ENCODE measurements at regions of chr1 and their contacts with region 1.

Region 1: GRCh38 chr1:213015099-213016050 is at the start of gene ANGEL2:
- DNase-seq: peak; percentile 77 to 97 (median 93)
- ATAC-seq: peak; percentile 99
- H3K4me3 ChIP-seq: peak within 1 kb of the TSS; percentile 87
- H3K4me3 Mint-ChIP-seq: peak within 1 kb of the TSS; percentile 92 to 100 (median 100)
- H3K27ac ChIP-seq: peak within 1 kb of the TSS; percentile 82
- H3K27ac Mint-ChIP-seq: peak within 1 kb of the TSS; percentile 94 to 100 (median 99)
- H3K4me1 ChIP-seq: peaks cover 12 to 19% of the 10 kb centered on the region in 2 donors
- H3K4me1 Mint-ChIP-seq: peaks cover 26 to 47% (median 40%) of the 10 kb centered on the region in 7 donors
- H3K27me3 ChIP-seq: no peaks in the 10 kb centered on the region
- H3K27me3 Mint-ChIP-seq: peaks cover 0 to 7% (median 0%) of the 10 kb centered on the region in 5 donors
- total RNA-seq, gene ANGEL2: 57.8 to 96.5 (median 63.4) TPM

Region 2: DNA sequence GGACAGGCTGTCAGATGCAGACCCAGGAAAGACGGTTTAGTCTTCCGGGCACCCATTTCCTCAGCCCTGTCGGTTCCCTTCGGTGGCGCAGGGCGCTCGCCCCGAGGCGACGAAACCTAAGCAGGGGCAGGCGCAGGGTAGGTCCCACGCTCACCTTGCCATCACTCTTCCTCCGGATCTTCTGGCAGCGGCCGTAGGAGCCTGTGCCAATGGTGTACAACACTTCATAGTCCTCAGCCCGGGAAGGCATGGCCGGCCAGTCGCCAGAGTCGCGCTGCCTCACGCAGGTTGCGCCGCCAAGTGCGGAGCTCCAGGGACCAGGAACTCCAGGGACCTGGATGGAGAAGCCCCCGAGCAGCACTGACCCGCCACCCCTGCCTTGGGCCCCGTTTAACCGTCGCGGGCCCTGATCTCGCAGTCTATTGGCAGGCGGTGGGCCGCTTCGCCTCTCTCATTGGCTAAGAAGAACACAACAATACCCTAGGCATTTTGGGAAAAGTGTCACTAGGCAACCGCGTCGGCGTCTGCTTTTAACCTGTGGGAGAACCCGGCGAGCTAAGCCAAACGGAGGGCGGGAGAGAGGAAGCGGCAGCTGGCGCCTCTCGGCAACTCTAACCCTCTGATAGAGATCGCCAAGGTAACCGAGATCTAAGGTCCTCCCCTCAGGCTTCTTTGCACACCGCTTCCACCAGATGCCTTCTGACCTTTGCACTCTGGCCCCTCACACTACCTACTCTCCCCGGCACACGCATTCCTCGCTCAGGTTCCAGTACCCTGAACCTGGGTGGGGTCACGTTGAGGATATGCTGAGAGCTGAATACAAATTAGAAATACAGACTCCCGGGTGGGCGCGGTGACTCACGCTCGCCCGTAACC is 1339.9 kb before region 1 on chr1 and contains the start of gene NEK2:
- CTCF ChIA-PET with region 1: no interaction called
- POLR2A ChIA-PET with region 1: no interaction called
- intact Hi-C with region 1: loop called in 1 of 2 experiments (anchors 1 kb)
- DNase-seq: peak; percentile 53 to 90 (median 85)
- ATAC-seq: peak; percentile 97
- H3K4me3 ChIP-seq: peak within 1 kb of the TSS; percentile 76
- H3K4me3 Mint-ChIP-seq: peak within 1 kb of the TSS; percentile 88 to 96 (median 92)
- H3K27ac ChIP-seq: peak within 1 kb of the TSS; percentile 56
- H3K27ac Mint-ChIP-seq: peak within 1 kb of the TSS; percentile 45 to 88 (median 80)
- H3K4me1 ChIP-seq: peaks cover 5 to 7% of the 10 kb centered on the region in 2 donors
- H3K4me1 Mint-ChIP-seq: peaks cover 8 to 38% (median 13%) of the 10 kb centered on the region in 7 donors
- H3K27me3 ChIP-seq: no peaks in the 10 kb centered on the region
- H3K27me3 Mint-ChIP-seq: no peaks in the 10 kb centered on the region
- total RNA-seq, gene NEK2: 0.16 to 26.5 (median 0.25) TPM in 4 of 5 experiments, not detected in the other

Region 3: GRCh38 chr1:212414328-212415106 is 600.9 kb before region 1 on chr1 and contains the start of gene PACC1:
- CTCF ChIA-PET with region 1: no interaction called
- POLR2A ChIA-PET with region 1: no interaction called
- intact Hi-C with region 1: loop called in 1 of 2 experiments (anchors 1 kb)
- DNase-seq: peak; percentile 77 to 89 (median 86)
- ATAC-seq: peak; percentile 98
- H3K4me3 ChIP-seq: peak within 1 kb of the TSS; percentile 98
- H3K4me3 Mint-ChIP-seq: peak within 1 kb of the TSS; percentile 87 to 100 (median 94)
- H3K27ac ChIP-seq: peak within 1 kb of the TSS; percentile 71
- H3K27ac Mint-ChIP-seq: peak within 1 kb of the TSS; percentile 74 to 94 (median 89)
- H3K4me1 ChIP-seq: peaks cover 15 to 19% of the 10 kb centered on the region in 2 donors
- H3K4me1 Mint-ChIP-seq: peaks cover 22 to 46% (median 40%) of the 10 kb centered on the region in 7 donors
- H3K27me3 ChIP-seq: no peaks in the 10 kb centered on the region
- H3K27me3 Mint-ChIP-seq: no peaks in the 10 kb centered on the region
- total RNA-seq, gene PACC1: 7.9 to 13.4 (median 12.0) TPM

Region 4: DNA sequence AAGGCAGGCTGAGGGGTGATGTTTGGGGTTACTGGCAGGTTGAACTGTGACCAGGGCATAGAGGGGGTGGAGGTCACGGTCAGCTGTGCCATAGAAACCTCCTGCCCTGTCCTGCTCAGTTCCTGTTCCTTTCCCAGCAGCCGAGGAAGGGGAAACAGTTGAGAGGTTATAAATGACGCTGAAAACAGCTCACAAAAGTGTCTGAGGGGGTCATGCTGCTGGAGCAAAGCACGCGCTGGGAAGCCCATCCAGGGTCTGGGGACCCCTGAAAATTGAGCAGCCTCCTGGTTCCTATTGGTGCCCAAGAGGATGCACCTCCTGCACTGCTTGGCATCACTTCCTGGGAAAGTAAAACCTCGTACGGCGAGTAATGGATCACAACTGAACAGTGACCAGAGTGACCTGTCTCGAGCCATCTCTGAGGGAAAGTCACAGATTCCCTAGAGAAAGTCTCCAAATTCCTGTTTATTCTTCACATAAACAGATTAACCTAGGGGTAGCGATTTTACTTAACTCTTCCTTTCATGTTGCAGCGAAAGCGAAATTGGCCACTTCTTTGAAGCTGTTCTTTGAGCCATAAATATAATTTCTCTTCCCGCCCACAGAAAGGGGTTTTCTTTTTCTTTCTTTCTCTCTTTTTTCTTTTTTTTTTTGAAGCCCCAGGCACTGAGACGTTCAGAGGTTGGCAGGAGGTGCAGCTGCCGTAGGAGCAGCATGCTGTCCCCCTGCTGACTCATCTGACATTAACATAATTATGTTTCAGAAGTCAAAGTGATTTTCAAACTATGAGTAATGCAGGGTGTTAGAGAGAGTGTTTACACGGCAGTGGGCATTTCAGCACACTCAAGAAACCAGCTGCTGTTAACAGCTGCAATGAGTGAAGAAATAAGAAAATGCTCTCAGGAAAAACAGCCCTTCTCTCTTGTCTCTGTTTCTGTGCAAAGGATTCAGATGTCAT is 448.6 kb before region 1 on chr1:
- CTCF ChIA-PET with region 1: interaction called, 3 read pairs
- POLR2A ChIA-PET with region 1: no interaction called
- intact Hi-C with region 1: loop called in 1 of 2 experiments (anchors 10 kb)
- DNase-seq: peak in 7 of 9 donors; percentile 23 to 66 (median 30)
- ATAC-seq: peak; percentile 96
- H3K4me3 ChIP-seq: peak overlapping the region; percentile 78
- H3K4me3 Mint-ChIP-seq: peak overlapping the region; percentile 80 to 98 (median 88)
- H3K27ac ChIP-seq: peak overlapping the region; percentile 31
- H3K27ac Mint-ChIP-seq: peak overlapping the region; percentile 62 to 90 (median 77)
- H3K4me1 ChIP-seq: peaks cover 0 to 6% of the 10 kb centered on the region in 2 donors
- H3K4me1 Mint-ChIP-seq: peaks cover 9 to 27% (median 15%) of the 10 kb centered on the region in 7 donors
- H3K27me3 ChIP-seq: no peaks in the 10 kb centered on the region
- H3K27me3 Mint-ChIP-seq: peaks cover 0 to 43% (median 0%) of the 10 kb centered on the region in 5 donors

Region 5: GRCh38 chr1:212791676-212792395 is 223.5 kb before region 1 on chr1 and contains the starts of genes NSL1 and TATDN3:
- CTCF ChIA-PET with region 1: no interaction called
- POLR2A ChIA-PET with region 1: interaction called, 8 read pairs
- intact Hi-C with region 1: loop called (anchors 1 kb)
- DNase-seq: peak; percentile 82 to 99 (median 92)
- ATAC-seq: peak; percentile 98
- H3K4me3 ChIP-seq: peak within 1 kb of the TSS; percentile 100
- H3K4me3 Mint-ChIP-seq: peak within 1 kb of the TSS; percentile 86 to 98 (median 95)
- H3K27ac ChIP-seq: peak within 1 kb of the TSS; percentile 83
- H3K27ac Mint-ChIP-seq: peak within 1 kb of the TSS; percentile 87 to 99 (median 96)
- H3K4me1 ChIP-seq: peaks cover 17 to 19% of the 10 kb centered on the region in 2 donors
- H3K4me1 Mint-ChIP-seq: peaks cover 27 to 58% (median 43%) of the 10 kb centered on the region in 7 donors
- H3K27me3 ChIP-seq: no peaks in the 10 kb centered on the region
- H3K27me3 Mint-ChIP-seq: no peaks in the 10 kb centered on the region
- total RNA-seq, gene NSL1: 22.3 to 42.3 (median 37.7) TPM
- total RNA-seq, gene TATDN3: 10.0 to 17.7 (median 13.9) TPM

Region 6: DNA sequence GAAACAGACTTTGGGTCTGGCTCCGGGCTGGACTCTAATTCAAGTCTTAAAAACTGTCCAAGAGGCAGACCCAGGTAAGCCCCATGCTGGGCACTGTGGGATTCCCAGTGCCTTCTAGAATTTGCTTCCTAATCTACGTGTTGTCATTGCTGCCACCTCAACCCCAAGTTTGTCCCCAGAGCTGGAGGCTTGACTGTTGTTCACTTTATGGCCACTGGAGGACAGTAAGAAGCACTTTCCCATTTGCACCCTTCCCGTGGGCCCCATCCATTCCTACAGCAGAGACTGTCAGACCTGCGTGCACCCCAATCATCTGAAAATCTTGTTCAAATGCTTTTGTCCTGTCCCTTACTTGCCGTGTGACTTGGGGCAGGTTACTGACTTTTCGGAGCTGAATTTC is 94.5 kb before region 1 on chr1:
- CTCF ChIA-PET with region 1: no interaction called
- POLR2A ChIA-PET with region 1: no interaction called
- intact Hi-C with region 1: no loop called
- DNase-seq: no peak
- ATAC-seq: no peak
- H3K4me3 ChIP-seq: no peak overlapping the region
- H3K4me3 Mint-ChIP-seq: no peak overlapping the region
- H3K27ac ChIP-seq: no peak overlapping the region
- H3K27ac Mint-ChIP-seq: no peak overlapping the region
- H3K4me1 ChIP-seq: no peaks in the 10 kb centered on the region
- H3K4me1 Mint-ChIP-seq: peaks cover 0 to 5% (median 0%) of the 10 kb centered on the region in 7 donors
- H3K27me3 ChIP-seq: no peaks in the 10 kb centered on the region
- H3K27me3 Mint-ChIP-seq: peaks cover 4 to 34% (median 15%) of the 10 kb centered on the region in 5 donors

Region 7: GRCh38 chr1:213051127-213051880 is 35.9 kb after region 1 on chr1 and contains the start of gene RPS6KC1:
- CTCF ChIA-PET with region 1: no interaction called
- POLR2A ChIA-PET with region 1: no interaction called
- intact Hi-C with region 1: loop called (anchors 1 kb)
- DNase-seq: peak; percentile 64 to 82 (median 79)
- ATAC-seq: peak; percentile 97
- H3K4me3 ChIP-seq: peak within 1 kb of the TSS; percentile 97
- H3K4me3 Mint-ChIP-seq: peak within 1 kb of the TSS; percentile 93 to 99 (median 96)
- H3K27ac ChIP-seq: peak within 1 kb of the TSS; percentile 72
- H3K27ac Mint-ChIP-seq: peak within 1 kb of the TSS; percentile 75 to 98 (median 93)
- H3K4me1 ChIP-seq: peaks cover 0 to 13% of the 10 kb centered on the region in 2 donors
- H3K4me1 Mint-ChIP-seq: peaks cover 23 to 39% (median 35%) of the 10 kb centered on the region in 7 donors
- H3K27me3 ChIP-seq: peaks cover 0 to 4% of the 10 kb centered on the region in 2 donors
- H3K27me3 Mint-ChIP-seq: peaks cover 9 to 27% (median 23%) of the 10 kb centered on the region in 5 donors
- total RNA-seq, gene RPS6KC1: 9.1 to 18.9 (median 14.3) TPM

Region 8: DNA sequence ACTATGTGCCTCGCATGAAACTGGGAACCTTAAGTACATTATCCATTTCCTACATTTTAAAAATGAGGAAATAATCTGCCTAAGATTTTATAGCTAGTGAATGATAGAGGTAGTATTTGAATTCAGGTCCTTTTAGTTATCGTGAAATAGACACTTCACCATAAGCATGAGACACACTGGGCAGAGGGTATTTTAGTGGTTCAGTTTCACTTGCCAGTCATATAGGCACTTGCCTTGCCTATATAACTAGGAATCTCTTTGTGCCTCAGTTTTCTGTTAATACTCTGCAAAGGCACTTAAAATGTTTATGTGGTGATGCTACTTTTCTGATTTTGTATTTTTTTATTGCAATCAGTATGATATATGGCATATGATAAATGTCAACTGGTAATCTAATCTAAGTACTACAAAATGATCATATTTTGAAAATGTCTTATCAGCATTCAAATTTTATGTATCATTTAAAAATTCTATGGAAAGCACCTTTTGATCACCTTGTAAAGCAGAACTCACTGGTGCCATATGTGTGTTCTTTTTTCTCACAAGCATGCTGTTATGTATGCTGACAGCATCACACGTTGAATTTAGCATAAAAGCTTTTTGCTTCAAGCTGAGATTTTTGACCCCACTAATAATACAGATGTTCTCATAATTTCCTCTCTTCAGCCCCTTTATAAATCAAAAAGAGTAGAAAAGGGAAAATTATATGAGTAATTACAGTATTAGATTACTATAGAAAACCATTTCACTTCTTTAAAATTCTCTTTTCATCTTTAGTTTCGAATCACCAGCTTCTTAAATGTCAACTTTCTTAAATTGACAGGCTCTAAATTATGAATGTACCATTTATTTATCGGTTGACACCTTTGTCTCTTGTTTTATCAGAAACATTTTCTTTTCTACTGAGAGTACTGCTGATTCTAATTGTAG is 88.3 kb after region 1 on chr1:
- CTCF ChIA-PET with region 1: no interaction called
- POLR2A ChIA-PET with region 1: no interaction called
- intact Hi-C with region 1: no loop called
- DNase-seq: no peak
- ATAC-seq: no peak
- H3K4me3 ChIP-seq: no peak overlapping the region
- H3K4me3 Mint-ChIP-seq: no peak overlapping the region
- H3K27ac ChIP-seq: no peak overlapping the region
- H3K27ac Mint-ChIP-seq: no peak overlapping the region
- H3K4me1 ChIP-seq: no peaks in the 10 kb centered on the region
- H3K4me1 Mint-ChIP-seq: peaks cover 0 to 3% (median 0%) of the 10 kb centered on the region in 7 donors
- H3K27me3 ChIP-seq: no peaks in the 10 kb centered on the region
- H3K27me3 Mint-ChIP-seq: no peaks in the 10 kb centered on the region

Region 9: GRCh38 chr1:213669964-213670691 is 654.8 kb after region 1 on chr1:
- CTCF ChIA-PET with region 1: no interaction called
- POLR2A ChIA-PET with region 1: no interaction called
- intact Hi-C with region 1: loop called in 1 of 2 experiments (anchors 5 kb)
- DNase-seq: peak in 8 of 9 donors; percentile 9 to 89 (median 80)
- ATAC-seq: peak; percentile 93
- H3K4me3 ChIP-seq: no peak overlapping the region
- H3K4me3 Mint-ChIP-seq: peak overlapping the region in 8 of 10 donors; percentile 7 to 67 (median 52)
- H3K27ac ChIP-seq: peak overlapping the region; percentile 48
- H3K27ac Mint-ChIP-seq: peak overlapping the region in 8 of 9 donors; percentile 41 to 97 (median 90)
- H3K4me1 ChIP-seq: peaks cover 0 to 15% of the 10 kb centered on the region in 2 donors
- H3K4me1 Mint-ChIP-seq: peaks cover 7 to 39% (median 29%) of the 10 kb centered on the region in 7 donors
- H3K27me3 ChIP-seq: no peaks in the 10 kb centered on the region
- H3K27me3 Mint-ChIP-seq: no peaks in the 10 kb centered on the region

Measured in naive thymus-derived CD4-positive, alpha-beta T cell (primary cell).